ENCODE measurements at regions of chr17 and their contacts with region 1.

Region 1: DNA sequence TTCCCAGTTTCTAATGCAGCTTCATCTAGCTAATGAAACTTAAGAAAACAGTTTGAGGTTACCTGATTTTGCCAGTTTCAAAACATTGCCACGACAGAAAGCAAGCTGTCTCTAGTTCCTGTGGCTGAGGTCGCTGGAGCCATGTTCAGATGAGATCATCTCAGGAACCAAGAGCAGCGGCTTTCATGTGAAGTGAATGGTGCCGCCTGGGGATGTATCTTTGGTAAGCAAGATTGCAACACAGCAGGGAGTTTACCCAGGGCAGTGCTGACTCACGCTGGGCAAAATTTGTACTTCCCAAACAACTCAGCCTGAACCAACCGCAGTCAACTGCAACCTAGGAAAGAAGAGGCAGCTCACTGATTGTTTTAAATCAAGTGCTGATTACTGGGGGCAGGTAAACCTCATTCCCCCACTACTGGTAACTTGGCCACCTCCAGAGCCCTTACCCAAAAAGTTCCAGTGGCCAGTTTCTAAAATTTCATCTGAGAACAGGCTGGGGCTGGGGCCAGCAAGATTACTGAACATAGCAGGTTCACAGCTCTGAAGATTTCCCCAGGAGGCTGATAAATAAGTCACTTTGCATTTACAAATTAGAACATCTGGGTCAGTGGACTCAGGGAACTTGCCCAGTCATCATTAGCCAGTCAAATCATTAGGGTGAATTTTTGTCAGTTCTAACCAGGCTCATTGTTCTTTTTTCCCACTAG is at the start of gene RFFL:
- DNase-seq: peak; percentile 45 to 92 (median 80)
- ATAC-seq: peak; percentile 99
- H3K4me3 ChIP-seq: peak within 1 kb of the TSS; percentile 8
- H3K4me3 Mint-ChIP-seq: peak within 1 kb of the TSS; percentile 71 to 89 (median 80)
- H3K27ac ChIP-seq: peak within 1 kb of the TSS; percentile 71
- H3K27ac Mint-ChIP-seq: peak within 1 kb of the TSS; percentile 88 to 97 (median 94)
- H3K4me1 ChIP-seq: peaks cover 21 to 29% of the 10 kb centered on the region in 2 donors
- H3K4me1 Mint-ChIP-seq: peaks cover 37 to 80% (median 65%) of the 10 kb centered on the region in 7 donors
- H3K27me3 ChIP-seq: no peaks in the 10 kb centered on the region
- H3K27me3 Mint-ChIP-seq: no peaks in the 10 kb centered on the region
- total RNA-seq, gene RFFL: 45.0 to 74.7 (median 55.7) TPM

Region 2: DNA sequence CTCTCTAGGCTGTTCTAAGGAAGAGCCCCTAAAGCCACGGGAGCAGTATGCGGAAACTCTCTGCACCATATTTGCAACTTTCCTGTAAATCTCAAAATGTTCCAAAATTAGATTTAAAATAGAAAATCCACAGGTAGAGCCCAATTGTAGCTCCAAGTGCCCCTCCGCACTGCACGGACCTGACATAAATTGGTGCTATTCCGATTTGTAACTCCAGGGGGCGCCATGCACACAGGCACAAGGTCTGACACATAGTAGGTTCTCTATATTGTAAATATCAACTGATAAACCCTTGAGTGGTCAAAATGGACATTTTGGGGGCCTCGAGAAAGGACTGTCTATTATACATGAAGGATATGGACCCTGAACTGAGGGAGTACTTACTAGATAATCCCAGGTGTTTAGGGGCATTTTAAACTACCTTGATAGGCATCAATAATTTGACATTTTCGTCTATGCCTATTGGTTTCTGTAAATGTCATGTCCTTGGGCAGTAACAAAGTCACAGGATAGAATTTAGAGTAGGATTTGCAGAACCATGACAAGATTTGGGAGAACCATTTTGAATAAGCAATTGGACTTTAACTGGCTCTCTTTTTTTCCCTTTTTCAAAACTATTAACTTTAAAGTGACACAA is 520.9 kb before region 1 on chr17:
- CTCF ChIA-PET with region 1: no interaction called
- POLR2A ChIA-PET with region 1: no interaction called
- intact Hi-C with region 1: loop called in 1 of 2 experiments (anchors 1 kb)
- DNase-seq: peak; percentile 18 to 58 (median 35)
- ATAC-seq: peak; percentile 62
- H3K4me3 ChIP-seq: no peak overlapping the region
- H3K4me3 Mint-ChIP-seq: no peak overlapping the region
- H3K27ac ChIP-seq: no peak overlapping the region
- H3K27ac Mint-ChIP-seq: no peak overlapping the region
- H3K4me1 ChIP-seq: no peaks in the 10 kb centered on the region
- H3K4me1 Mint-ChIP-seq: no peaks in the 10 kb centered on the region
- H3K27me3 ChIP-seq: no peaks in the 10 kb centered on the region
- H3K27me3 Mint-ChIP-seq: peaks cover 21 to 34% (median 30%) of the 10 kb centered on the region in 5 donors

Region 3: GRCh38 chr17:34980681-34981537 is 82.8 kb before region 1 on chr17:
- CTCF ChIA-PET with region 1: interaction called, 4 read pairs
- POLR2A ChIA-PET with region 1: interaction called, 21 read pairs
- intact Hi-C with region 1: loop called in 1 of 2 experiments (anchors 1 kb)
- DNase-seq: peak in 7 of 9 donors; percentile 65 to 87 (median 74)
- ATAC-seq: peak; percentile 91
- H3K4me3 ChIP-seq: peak overlapping the region; percentile 68
- H3K4me3 Mint-ChIP-seq: peak overlapping the region; percentile 87 to 97 (median 94)
- H3K27ac ChIP-seq: peak overlapping the region; percentile 99
- H3K27ac Mint-ChIP-seq: peak overlapping the region; percentile 91 to 98 (median 97)
- H3K4me1 ChIP-seq: peaks cover 17 to 26% of the 10 kb centered on the region in 2 donors
- H3K4me1 Mint-ChIP-seq: peaks cover 36 to 57% (median 53%) of the 10 kb centered on the region in 7 donors
- H3K27me3 ChIP-seq: no peaks in the 10 kb centered on the region
- H3K27me3 Mint-ChIP-seq: no peaks in the 10 kb centered on the region

Region 4: DNA sequence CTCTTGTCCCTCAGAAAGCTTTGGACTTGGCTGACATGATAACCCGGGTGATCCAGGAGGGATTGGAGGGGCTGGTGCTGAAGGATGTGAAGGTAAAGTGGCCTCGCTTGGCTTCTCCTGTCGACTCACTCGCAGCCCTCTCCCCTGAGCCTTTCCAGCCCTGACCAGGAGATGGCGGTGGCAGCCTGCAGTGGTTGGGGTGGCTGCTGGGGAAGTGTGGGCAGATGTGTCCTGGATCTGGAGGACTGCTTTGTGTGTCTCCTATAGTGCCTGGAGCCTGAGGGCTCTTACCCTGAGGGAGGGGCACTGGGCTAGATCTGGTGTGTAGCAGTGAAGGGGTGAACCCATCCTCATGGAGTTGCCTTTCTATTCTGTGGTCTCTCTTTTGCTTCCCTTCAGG is 65.5 kb before region 1 on chr17:
- CTCF ChIA-PET with region 1: interaction called, 58 read pairs
- POLR2A ChIA-PET with region 1: interaction called, 10 read pairs
- intact Hi-C with region 1: loop called (anchors 1 kb)
- DNase-seq: peak; percentile 62 to 82 (median 76)
- ATAC-seq: peak; percentile 96
- H3K4me3 ChIP-seq: no peak overlapping the region
- H3K4me3 Mint-ChIP-seq: no peak overlapping the region
- H3K27ac ChIP-seq: no peak overlapping the region
- H3K27ac Mint-ChIP-seq: peak overlapping the region; percentile 60 to 89 (median 82)
- H3K4me1 ChIP-seq: no peaks in the 10 kb centered on the region
- H3K4me1 Mint-ChIP-seq: peaks cover 5 to 10% (median 6%) of the 10 kb centered on the region in 7 donors
- H3K27me3 ChIP-seq: no peaks in the 10 kb centered on the region
- H3K27me3 Mint-ChIP-seq: no peaks in the 10 kb centered on the region

Region 5: GRCh38 chr17:35046740-35047283 is 16.9 kb before region 1 on chr17:
- CTCF ChIA-PET with region 1: interaction called, 19 read pairs
- POLR2A ChIA-PET with region 1: interaction called, 132 read pairs
- intact Hi-C with region 1: loop called (anchors 1 kb)
- DNase-seq: peak in 8 of 9 donors; percentile 54 to 82 (median 70)
- ATAC-seq: peak; percentile 77
- H3K4me3 ChIP-seq: peak overlapping the region; percentile 45
- H3K4me3 Mint-ChIP-seq: peak overlapping the region; percentile 71 to 92 (median 84)
- H3K27ac ChIP-seq: peak overlapping the region; percentile 69
- H3K27ac Mint-ChIP-seq: peak overlapping the region; percentile 85 to 97 (median 93)
- H3K4me1 ChIP-seq: peaks cover 79 to 81% of the 10 kb centered on the region in 2 donors
- H3K4me1 Mint-ChIP-seq: peaks cover 52 to 84% (median 74%) of the 10 kb centered on the region in 7 donors
- H3K27me3 ChIP-seq: no peaks in the 10 kb centered on the region
- H3K27me3 Mint-ChIP-seq: no peaks in the 10 kb centered on the region

Region 6: DNA sequence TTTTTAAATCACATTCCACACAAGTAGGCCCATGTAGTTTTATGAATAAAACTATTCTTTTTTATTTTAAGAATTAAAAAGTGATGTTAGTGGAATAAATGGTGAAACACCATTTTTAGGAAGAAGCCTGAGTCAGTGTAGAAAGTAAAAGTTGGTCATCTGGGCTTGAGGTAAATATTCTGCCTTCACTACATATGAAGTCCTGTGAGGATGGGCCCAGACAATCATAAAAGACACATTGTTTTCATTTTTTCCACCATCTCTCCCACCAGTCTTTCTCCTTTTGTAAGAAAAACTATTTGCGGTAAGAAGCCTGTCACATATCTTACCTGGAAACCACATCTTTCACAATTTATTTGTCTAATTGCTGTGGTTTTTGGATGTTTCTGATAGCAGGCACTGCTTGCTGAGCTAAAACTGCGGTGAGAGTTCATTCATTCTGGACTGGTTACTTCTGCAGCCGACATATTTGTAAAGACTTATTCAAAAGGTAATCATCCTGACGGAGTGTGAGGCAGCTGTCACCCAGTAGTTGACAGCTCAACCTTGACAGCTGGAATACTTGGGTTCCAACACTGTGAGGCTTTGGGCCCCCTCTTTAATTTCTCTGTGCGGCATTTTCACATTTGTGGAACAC is 10.4 kb after region 1 on chr17:
- CTCF ChIA-PET with region 1: interaction called, 11 read pairs
- POLR2A ChIA-PET with region 1: interaction called, 4 read pairs
- intact Hi-C with region 1: loop called in 1 of 2 experiments (anchors 1 kb)
- DNase-seq: no peak
- ATAC-seq: peak; percentile 41
- H3K4me3 ChIP-seq: no peak overlapping the region
- H3K4me3 Mint-ChIP-seq: peak overlapping the region; percentile 43 to 78 (median 64)
- H3K27ac ChIP-seq: peak overlapping the region; percentile 39
- H3K27ac Mint-ChIP-seq: peak overlapping the region; percentile 56 to 89 (median 81)
- H3K4me1 ChIP-seq: peaks cover 42 to 45% of the 10 kb centered on the region in 2 donors
- H3K4me1 Mint-ChIP-seq: peaks cover 45 to 84% (median 67%) of the 10 kb centered on the region in 7 donors
- H3K27me3 ChIP-seq: no peaks in the 10 kb centered on the region
- H3K27me3 Mint-ChIP-seq: no peaks in the 10 kb centered on the region

Region 7: GRCh38 chr17:35119368-35120165 is 55.9 kb after region 1 on chr17 and contains the start of gene RAD51D:
- CTCF ChIA-PET with region 1: interaction called, 8 read pairs
- POLR2A ChIA-PET with region 1: interaction called, 3 read pairs
- intact Hi-C with region 1: loop called (anchors 1 kb)
- DNase-seq: peak; percentile 71 to 90 (median 83)
- ATAC-seq: peak; percentile 96
- H3K4me3 ChIP-seq: peak within 1 kb of the TSS; percentile 82
- H3K4me3 Mint-ChIP-seq: peak within 1 kb of the TSS; percentile 87 to 97 (median 94)
- H3K27ac ChIP-seq: peak within 1 kb of the TSS; percentile 81
- H3K27ac Mint-ChIP-seq: peak within 1 kb of the TSS; percentile 88 to 96 (median 93)
- H3K4me1 ChIP-seq: peaks cover 14 to 15% of the 10 kb centered on the region in 2 donors
- H3K4me1 Mint-ChIP-seq: peaks cover 23 to 45% (median 33%) of the 10 kb centered on the region in 7 donors
- H3K27me3 ChIP-seq: no peaks in the 10 kb centered on the region
- H3K27me3 Mint-ChIP-seq: no peaks in the 10 kb centered on the region
- total RNA-seq, gene RAD51D: 15.0 to 34.2 (median 25.4) TPM

Measured in naive thymus-derived CD4-positive, alpha-beta T cell (primary cell).